ENCODE measurements at regions of chr11 and their contacts with region 1.

Region 1: GRCh38 chr11:925496-926321 is at the start of gene AP2A2:
- DNase-seq: peak; percentile 70 to 82
- ATAC-seq: peak; percentile 91 to 95
- H3K4me3 ChIP-seq: peak within 1 kb of the TSS; percentile 65 to 93 (median 74)
- H3K27ac ChIP-seq: peak within 1 kb of the TSS; percentile 82 to 94 (median 88)
- H3K4me1 ChIP-seq: peaks cover 8 to 18% of the 10 kb centered on the region in 2 donors
- H3K27me3 ChIP-seq: no peaks in the 10 kb centered on the region
- CTCF ChIP-seq: peak in 4 of 5 experiments; percentile 92 to 98 (median 96)
- POLR2A ChIP-seq: peak; percentile 80 to 83
- total RNA-seq, gene AP2A2: 21.2 to 26.1 (median 25.7) TPM

Region 2: GRCh38 chr11:720642-721246 is 205.0 kb before region 1 on chr11:
- in situ Hi-C with region 1: no loop called
- intact Hi-C with region 1: no loop called
- DNase-seq: no peak
- ATAC-seq: peak in 1 of 2 donors; percentile 79
- H3K4me3 ChIP-seq: peak overlapping the region in 2 of 4 donors; percentile 14 to 51
- H3K27ac ChIP-seq: no peak overlapping the region
- H3K4me1 ChIP-seq: peaks cover 4 to 15% of the 10 kb centered on the region in 2 donors
- H3K27me3 ChIP-seq: peaks cover 48 to 65% (median 63%) of the 10 kb centered on the region in 3 donors
- CTCF ChIP-seq: no peak
- POLR2A ChIP-seq: no peak

Region 3: DNA sequence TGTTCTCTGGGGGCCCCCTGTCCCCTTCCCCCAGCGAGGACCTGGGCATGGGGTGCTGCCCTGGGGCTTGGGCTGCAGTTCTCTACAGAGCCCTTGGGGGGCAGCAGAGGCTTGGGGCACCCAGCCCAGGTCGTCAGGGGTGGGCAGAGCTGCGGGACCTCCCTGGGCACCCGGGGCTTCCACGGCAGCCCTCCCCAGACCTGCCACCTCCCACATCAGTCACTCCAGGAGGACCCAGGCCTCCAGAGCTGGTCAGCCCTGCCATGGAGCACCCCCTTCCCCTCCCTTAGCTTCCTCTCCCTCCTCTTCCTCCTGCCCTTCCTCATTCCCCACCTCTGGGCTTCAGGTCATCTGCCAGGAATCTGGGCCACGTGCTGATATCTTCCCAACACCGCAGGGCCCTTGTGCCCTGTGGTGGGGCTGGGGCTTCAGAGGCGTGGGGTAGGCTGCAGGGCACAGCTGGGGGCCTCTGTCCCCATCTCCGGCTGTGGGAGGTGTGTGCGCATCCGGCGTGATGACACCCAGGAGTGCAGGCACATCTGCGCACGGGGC is 77.3 kb before region 1 on chr11:
- in situ Hi-C with region 1: no loop called
- intact Hi-C with region 1: loop called (anchors 5 kb)
- DNase-seq: no peak
- ATAC-seq: no peak
- H3K4me3 ChIP-seq: no peak overlapping the region
- H3K27ac ChIP-seq: no peak overlapping the region
- H3K4me1 ChIP-seq: peaks cover 29 to 32% of the 10 kb centered on the region in 2 donors
- H3K27me3 ChIP-seq: peaks cover 10 to 16% (median 11%) of the 10 kb centered on the region in 3 donors
- CTCF ChIP-seq: peak; percentile 71 to 91 (median 85)
- POLR2A ChIP-seq: no peak

Region 4: DNA sequence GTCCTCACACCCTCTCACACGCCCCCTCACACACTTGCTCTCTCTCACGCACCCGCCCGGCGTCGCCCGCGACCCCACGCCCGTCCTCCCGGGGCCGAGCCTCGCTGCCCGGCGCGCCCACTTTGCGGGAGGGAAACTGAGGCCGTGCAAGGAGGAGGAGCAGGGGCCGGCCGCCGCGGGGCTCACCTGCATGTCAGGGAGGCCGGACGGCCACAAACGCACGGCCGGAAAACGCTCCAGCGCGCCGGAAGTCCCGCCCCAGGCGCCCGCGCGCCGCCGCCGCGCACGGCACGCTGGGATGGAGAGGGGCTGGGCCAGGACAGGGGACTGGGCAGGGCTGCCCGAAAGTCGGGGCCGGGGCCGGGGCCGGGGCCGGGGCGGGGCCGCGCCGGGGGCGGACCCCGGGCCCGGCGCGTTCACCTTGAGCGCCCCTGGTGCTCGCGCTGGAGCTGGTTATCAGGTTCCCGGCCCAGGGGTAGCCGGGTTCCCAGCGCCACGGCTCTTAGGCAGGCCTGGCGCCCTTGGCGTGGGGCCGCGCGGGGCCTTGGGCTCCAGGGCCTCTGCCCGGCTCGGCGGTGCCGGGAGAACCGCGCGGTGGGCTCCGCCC is 15.0 kb before region 1 on chr11 and contains the start of gene CHID1:
- in situ Hi-C with region 1: no loop called
- intact Hi-C with region 1: loop called (anchors 1 kb)
- DNase-seq: peak; percentile 73 to 84
- ATAC-seq: peak; percentile 93 to 94
- H3K4me3 ChIP-seq: peak within 1 kb of the TSS; percentile 82 to 98 (median 88)
- H3K27ac ChIP-seq: peak within 1 kb of the TSS; percentile 81 to 97 (median 91)
- H3K4me1 ChIP-seq: peaks cover 11 to 14% of the 10 kb centered on the region in 2 donors
- H3K27me3 ChIP-seq: no peaks in the 10 kb centered on the region
- CTCF ChIP-seq: peak in 2 of 5 experiments; percentile 20
- POLR2A ChIP-seq: peak; percentile 63
- total RNA-seq, gene CHID1: 23.3 to 43.2 (median 33.1) TPM

Region 5: DNA sequence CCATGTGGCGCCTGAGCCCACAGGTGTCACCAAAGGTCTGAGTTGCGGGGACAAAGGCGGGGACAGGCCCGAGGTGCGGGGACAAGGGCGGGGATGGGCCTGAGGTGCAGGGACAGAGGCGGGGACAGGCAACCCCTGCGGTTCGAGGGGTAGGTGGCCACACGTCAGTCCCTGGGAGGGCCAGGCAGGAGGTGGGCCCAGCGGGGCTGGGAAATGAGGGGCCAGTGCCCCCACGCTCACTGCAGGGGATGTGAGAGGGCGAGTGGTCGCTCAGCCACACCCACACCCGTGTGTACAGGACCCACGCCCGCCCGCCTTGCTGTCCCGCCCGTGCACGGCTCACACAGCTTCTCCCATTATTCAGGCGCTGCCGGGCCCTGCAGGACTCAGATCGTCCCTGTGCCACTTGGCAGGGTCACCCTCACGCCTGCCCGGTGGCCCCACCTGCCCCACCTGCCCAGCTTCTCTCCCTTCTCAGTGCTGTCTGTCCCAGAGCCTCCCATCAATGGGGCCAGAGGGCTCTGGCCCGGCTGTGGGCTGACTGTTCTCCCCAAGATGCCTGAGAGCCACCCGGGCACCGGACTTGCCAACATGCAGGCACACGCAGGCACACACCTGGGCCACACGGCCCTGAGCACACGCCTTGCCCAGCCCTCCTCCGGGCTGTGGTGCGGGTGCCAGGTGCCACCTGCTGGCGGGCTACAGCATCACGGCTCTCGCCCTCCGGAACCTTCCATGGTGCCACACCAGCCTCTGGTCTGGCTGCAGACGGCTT is 125.1 kb after region 1 on chr11:
- in situ Hi-C with region 1: no loop called
- intact Hi-C with region 1: loop called (anchors 2 kb)
- DNase-seq: peak; percentile 17 to 41
- ATAC-seq: peak; percentile 77 to 89
- H3K4me3 ChIP-seq: no peak overlapping the region
- H3K27ac ChIP-seq: no peak overlapping the region
- H3K4me1 ChIP-seq: no peaks in the 10 kb centered on the region
- H3K27me3 ChIP-seq: peaks cover 26 to 43% (median 29%) of the 10 kb centered on the region in 3 donors
- CTCF ChIP-seq: peak; percentile 80 to 90 (median 88)
- POLR2A ChIP-seq: no peak

Measured in gastrocnemius medialis (tissue), 4 donors.